T-cell (primary cell): ENCODE measurements at regions of chr11 and their contacts with region 1.

Region 1: DNA sequence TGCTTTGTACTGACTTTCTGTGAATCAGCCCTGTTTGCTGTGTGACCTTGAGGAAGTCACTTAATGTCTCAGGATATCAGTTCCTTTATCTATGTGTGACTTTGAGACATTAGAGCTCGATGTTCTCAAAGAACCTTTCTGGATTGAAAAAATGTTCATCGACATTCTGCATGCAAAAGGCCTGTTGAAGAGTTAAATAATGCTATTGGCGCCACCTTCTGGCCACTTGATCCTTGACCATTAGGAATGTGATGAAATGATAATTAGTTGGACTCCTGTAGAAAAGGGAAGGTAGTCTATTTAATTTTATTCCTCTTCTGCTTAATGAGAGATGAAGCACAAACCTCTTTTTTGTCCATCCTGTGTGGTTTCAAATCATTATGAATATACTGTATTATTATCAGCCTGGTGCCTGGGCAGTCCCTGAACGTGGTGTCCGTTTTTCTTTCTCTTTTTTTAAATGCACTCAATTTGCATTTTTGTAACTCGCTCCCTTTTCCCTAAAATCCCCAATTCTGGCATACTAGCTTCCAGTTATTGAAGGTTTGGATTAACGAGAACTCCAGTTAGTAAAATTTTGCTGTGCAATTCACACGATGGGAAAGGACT is 20.7 kb downstream of the ELF5 start:
- DNase-seq: peak in 16 of 35 experiments; percentile 3 to 60 (median 10)
- ATAC-seq: no peak
- H3K4me3 ChIP-seq: no peak overlapping the region
- H3K4me3 Mint-ChIP-seq: no peak overlapping the region
- H3K27ac ChIP-seq: no peak overlapping the region
- H3K27ac Mint-ChIP-seq: no peak overlapping the region
- H3K4me1 ChIP-seq: no peaks in the 10 kb centered on the region
- H3K4me1 Mint-ChIP-seq: no peaks in the 10 kb centered on the region
- H3K27me3 ChIP-seq: peaks cover 0 to 17% of the 10 kb centered on the region in 2 experiments
- H3K27me3 Mint-ChIP-seq: peaks cover 0 to 11% of the 10 kb centered on the region in 2 donors

Region 2: DNA sequence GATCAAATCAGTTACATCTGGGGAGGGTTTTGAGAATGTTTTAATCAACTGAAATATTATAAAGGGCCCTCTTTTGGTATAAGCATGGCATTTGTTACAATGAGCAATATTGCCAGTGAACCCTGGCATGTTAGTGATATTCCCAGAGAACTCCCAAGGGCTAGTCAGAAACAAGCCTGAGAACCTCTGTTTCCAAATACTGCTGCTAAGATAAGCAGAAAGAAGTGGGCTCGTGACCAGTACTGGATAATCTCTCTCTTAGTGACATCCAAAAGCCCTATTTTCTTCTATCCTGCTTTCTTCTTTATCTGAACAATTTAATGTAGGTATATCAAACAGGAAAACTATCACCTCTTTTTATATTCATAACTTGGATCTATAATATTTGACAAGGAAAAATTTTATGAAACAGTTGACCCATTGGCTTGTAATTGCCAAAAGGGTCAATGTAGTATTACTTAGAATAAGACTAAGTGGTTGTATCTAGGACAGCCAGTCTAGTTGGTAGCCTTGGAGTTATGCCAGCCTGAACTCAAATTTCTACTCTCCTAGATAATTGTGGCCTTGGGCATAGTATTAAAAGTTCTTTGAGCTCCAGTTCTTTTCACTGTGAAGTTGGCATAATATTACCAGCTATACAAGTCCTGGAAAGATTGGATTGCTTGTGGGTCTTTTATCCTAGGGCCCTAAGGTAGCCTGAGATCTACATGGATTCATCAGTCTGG is 38.4 kb before region 1 on chr11:
- CTCF ChIA-PET with region 1: no interaction called
- POLR2A ChIA-PET with region 1: interaction called in 1 of 2 experiments, 13 read pairs
- DNase-seq: no peak
- ATAC-seq: no peak
- H3K4me3 ChIP-seq: no peak overlapping the region
- H3K4me3 Mint-ChIP-seq: no peak overlapping the region
- H3K27ac ChIP-seq: no peak overlapping the region
- H3K27ac Mint-ChIP-seq: no peak overlapping the region
- H3K4me1 ChIP-seq: no peaks in the 10 kb centered on the region
- H3K4me1 Mint-ChIP-seq: peaks cover 0 to 4% (median 2%) of the 10 kb centered on the region in 3 donors
- H3K27me3 ChIP-seq: no peaks in the 10 kb centered on the region
- H3K27me3 Mint-ChIP-seq: no peaks in the 10 kb centered on the region

Region 3: DNA sequence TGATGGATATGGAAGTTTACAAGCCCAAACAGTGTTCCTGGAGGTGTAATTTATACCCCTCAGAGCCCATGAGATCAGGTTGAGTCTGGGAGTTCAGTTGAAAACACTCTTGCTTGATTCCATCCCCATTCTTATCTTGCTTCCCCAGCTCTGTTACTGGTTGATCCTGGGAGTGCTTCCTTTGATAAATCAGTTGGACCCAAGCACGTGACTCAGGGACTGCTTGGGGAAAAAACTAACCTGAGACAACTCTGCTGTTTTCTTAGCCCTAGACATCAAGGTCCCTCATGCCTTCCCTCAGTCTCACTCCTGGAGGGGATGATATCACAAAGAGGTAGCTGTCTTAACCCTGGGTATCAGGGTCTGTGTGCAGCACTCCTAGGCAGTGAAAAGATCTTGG is 961.5 kb after region 1 on chr11:
- CTCF ChIA-PET with region 1: no interaction called
- POLR2A ChIA-PET with region 1: no interaction called
- DNase-seq: no peak
- ATAC-seq: no peak
- H3K4me3 ChIP-seq: no peak overlapping the region
- H3K4me3 Mint-ChIP-seq: no peak overlapping the region
- H3K27ac ChIP-seq: no peak overlapping the region
- H3K27ac Mint-ChIP-seq: no peak overlapping the region
- H3K4me1 ChIP-seq: no peaks in the 10 kb centered on the region
- H3K4me1 Mint-ChIP-seq: no peaks in the 10 kb centered on the region
- H3K27me3 ChIP-seq: peaks cover 2 to 5% of the 10 kb centered on the region in 2 experiments
- H3K27me3 Mint-ChIP-seq: peaks cover 28 to 38% of the 10 kb centered on the region in 2 donors